Dendritic cell treated with granulocyte-macrophage colony-stimulating factor and Interleukin-4, amounts not matched to agents 40 ng/mL and 50 ng/mL, for 4 days (primary cell): ENCODE measurements at regions of chr18 and their contacts with region 1.

Region 1: DNA sequence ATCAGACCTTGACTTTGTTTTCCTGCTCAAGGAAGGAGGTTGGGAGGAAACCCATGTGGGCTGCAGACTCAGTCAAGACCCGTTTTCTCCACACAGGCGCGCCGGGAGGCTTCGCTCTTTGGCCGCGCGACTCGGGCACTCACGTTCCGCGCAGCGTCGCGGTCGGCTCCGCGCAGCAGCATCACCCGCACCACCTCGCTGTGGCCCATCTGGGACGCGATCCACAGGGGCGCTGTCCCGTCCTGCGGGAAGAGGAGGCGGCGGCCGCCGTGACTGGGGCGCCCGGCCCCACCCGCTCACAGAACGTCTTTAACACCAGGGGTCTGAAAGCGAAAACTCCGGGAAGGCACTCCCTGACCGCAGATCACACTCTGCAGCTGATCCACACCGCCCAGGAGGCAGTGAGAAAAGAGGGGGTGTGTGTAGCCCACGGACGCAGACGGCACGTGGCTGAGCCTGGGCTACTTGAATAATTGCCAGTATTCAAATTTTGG is 33.1 kb upstream of the NPC1 start:
- H3K4me3 Mint-ChIP-seq: peak overlapping the region; percentile 69
- H3K27ac Mint-ChIP-seq: peak overlapping the region; percentile 30
- H3K4me1 Mint-ChIP-seq: peaks cover 19% of the 10 kb centered on the region
- H3K27me3 Mint-ChIP-seq: peaks cover 35% of the 10 kb centered on the region

Region 2: GRCh38 chr18:23032030-23032582 is 587.3 kb before region 1 on chr18:
- intact Hi-C with region 1: no loop called
- H3K4me3 Mint-ChIP-seq: no peak overlapping the region
- H3K27ac Mint-ChIP-seq: no peak overlapping the region
- H3K4me1 Mint-ChIP-seq: peaks cover 5% of the 10 kb centered on the region
- H3K27me3 Mint-ChIP-seq: no peaks in the 10 kb centered on the region

Region 3: GRCh38 chr18:23406271-23406787 is 213.1 kb before region 1 on chr18:
- intact Hi-C with region 1: no loop called
- H3K4me3 Mint-ChIP-seq: no peak overlapping the region
- H3K27ac Mint-ChIP-seq: no peak overlapping the region
- H3K4me1 Mint-ChIP-seq: no peaks in the 10 kb centered on the region
- H3K27me3 Mint-ChIP-seq: no peaks in the 10 kb centered on the region

Region 4: DNA sequence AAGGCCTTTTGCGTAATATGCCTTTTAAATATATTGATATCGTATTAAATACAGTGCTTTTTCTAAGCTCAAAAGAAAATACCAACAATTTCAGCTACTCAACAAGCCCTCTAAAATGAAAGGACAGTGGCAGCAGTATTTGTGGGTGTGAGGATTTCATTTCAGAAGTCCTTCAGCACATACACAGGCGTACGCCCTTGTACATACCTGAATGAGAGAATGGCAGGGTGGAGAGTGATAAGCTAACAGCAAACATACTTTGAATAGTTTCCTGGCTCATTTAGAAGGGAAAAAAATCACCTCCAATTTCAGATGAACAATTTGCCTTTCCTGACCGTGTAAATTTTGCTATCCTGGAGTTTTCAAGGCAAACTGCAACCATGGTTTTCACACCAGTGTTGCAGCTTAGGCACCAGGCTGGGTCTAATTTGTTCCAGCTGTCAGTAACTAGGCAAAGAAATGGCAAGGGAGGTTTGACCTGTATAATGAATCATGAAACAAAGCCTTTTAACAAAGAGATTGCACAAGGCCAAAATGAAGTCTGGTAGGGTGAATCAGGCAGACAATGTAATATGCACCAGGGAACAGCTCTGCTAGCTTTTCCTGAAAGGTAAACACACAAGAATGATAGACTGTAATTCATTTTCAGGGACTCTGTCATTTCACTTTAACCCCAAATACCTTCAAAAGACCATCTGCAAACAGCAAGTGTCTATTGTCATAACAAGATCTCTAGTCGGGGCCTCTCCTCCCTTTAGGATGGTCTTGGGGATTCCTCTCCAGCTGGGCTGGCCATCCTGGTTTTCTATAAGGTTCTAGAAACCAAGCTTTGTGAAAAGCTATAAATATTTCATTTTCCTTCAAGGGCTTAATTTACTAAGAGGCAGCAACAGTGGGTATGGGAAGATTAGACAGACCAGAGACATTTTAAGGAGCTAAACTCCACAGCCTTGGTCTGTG is 31.8 kb after region 1 on chr18:
- intact Hi-C with region 1: no loop called
- H3K4me3 Mint-ChIP-seq: no peak overlapping the region
- H3K27ac Mint-ChIP-seq: no peak overlapping the region
- H3K4me1 Mint-ChIP-seq: peaks cover 14% of the 10 kb centered on the region
- H3K27me3 Mint-ChIP-seq: peaks cover 6% of the 10 kb centered on the region

Region 5: GRCh38 chr18:23703057-23703986 is 83.9 kb after region 1 on chr18:
- intact Hi-C with region 1: loop called (anchors 1 kb)
- H3K4me3 Mint-ChIP-seq: no peak overlapping the region
- H3K27ac Mint-ChIP-seq: no peak overlapping the region
- H3K4me1 Mint-ChIP-seq: peaks cover 5% of the 10 kb centered on the region
- H3K27me3 Mint-ChIP-seq: peaks cover 18% of the 10 kb centered on the region

Region 6: GRCh38 chr18:23812546-23813440 is 193.4 kb after region 1 on chr18:
- intact Hi-C with region 1: loop called (anchors 1 kb)
- H3K4me3 Mint-ChIP-seq: no peak overlapping the region
- H3K27ac Mint-ChIP-seq: no peak overlapping the region
- H3K4me1 Mint-ChIP-seq: peaks cover 7% of the 10 kb centered on the region
- H3K27me3 Mint-ChIP-seq: peaks cover 7% of the 10 kb centered on the region

Region 7: DNA sequence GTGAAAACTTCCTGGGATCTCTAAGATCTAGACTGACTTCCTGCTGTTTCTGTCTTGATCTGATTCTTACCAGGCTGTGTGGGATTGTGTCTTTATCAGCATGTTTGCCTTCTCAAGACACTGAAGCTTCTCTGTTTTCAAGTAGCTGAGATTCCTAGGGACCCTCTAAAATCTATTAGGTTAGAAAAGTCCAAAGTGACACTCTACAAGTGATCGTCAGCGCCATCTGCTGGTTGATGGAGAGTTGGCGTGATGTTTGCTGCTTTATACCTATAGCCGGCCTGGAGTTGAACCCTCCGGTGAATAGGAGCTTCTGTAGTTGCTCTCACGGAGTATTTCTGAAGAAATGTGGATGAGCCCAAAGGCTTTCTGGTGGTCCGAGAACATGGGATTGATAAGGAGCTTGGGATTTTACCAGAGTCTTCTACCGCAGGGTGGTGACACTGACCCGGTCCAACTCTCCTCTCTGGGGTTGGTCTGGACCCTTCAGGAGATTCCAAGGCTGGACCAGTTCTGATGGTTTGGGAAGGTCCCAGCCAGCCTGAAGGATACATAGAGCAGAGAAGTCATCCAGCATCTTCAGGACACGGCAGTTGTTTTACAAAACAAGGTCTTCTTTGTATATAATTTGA is 299.1 kb after region 1 on chr18:
- intact Hi-C with region 1: loop called (anchors 2 kb)
- H3K4me3 Mint-ChIP-seq: no peak overlapping the region
- H3K27ac Mint-ChIP-seq: no peak overlapping the region
- H3K4me1 Mint-ChIP-seq: no peaks in the 10 kb centered on the region
- H3K27me3 Mint-ChIP-seq: peaks cover 9% of the 10 kb centered on the region

Region 8: GRCh38 chr18:24118750-24119577 is 499.5 kb after region 1 on chr18:
- intact Hi-C with region 1: loop called (anchors 5 kb)
- H3K4me3 Mint-ChIP-seq: no peak overlapping the region
- H3K27ac Mint-ChIP-seq: no peak overlapping the region
- H3K4me1 Mint-ChIP-seq: peaks cover 10% of the 10 kb centered on the region
- H3K27me3 Mint-ChIP-seq: no peaks in the 10 kb centered on the region